H1 (cell line): ENCODE measurements at regions of chr15 and their contacts with region 1.

Region 1: DNA sequence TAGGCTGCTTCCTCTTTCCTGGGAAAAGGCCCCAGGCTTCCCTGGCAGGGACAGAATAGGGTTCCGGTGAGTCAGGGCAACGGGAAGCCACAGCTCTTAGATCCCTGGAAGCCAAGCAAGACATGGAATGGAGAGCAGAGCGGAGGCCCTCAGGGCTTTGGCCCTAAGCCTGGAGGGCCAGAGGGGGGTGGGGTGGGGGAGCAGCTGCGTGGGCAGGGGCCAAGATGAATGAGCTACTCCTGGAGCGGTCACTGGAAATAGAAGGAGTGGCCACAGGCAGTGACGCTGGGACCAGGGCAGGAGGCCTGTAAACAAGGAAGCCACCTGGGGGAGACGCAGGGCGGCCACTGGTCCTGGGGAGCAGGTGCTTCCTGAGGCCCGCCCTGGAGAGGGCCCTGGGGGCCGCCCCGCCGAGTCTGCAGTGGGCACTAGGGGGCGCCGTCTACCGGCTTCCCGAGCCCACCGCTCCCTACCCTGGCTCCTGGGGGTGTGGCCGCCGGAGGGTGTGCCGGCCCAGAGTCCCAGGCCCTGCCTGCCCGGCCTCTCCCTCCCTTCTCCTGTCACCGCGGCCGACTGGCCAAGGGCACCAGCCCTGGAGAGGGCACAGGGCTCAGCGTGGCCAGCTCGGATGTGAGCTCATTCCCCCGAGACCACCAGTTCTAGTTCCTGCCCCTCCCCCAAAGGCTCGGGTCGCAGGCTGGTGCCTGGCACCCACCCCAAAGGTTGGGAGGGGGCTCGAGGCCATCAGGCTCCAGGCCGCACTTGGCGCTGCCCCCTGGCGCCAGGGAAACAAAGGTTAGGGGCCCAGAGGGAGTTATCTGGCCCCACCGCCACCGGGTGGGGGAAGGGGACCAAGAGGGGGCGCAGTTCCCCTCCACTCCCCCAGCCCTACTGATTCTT is 12.1 kb downstream of the VPS18 start:
- DNase-seq: peak; percentile 65 to 98
- H3K4me3 ChIP-seq: peak overlapping the region; percentile 18 to 62 (median 36); a peak in 7 of 8 replicates
- H3K27ac ChIP-seq: no peak overlapping the region
- H3K4me1 ChIP-seq: peaks cover 0 to 13% (median 10%) of the 10 kb centered on the region in 4 experiments; a peak in 6 of 7 replicates
- H3K27me3 ChIP-seq: no peaks in the 10 kb centered on the region; a peak in 1 of 7 replicates
- CTCF ChIP-seq: peak in 2 of 3 experiments; percentile 80 to 97; a peak in 3 of 4 replicates
- EP300 ChIP-seq: no peak
- POLR2A ChIP-seq: no peak; a peak in 1 of 3 replicates
- RAD21 ChIP-seq: peak; percentile 80 to 87

Region 2: GRCh38 chr15:40812728-40813425 is 93.5 kb before region 1 on chr15:
- CTCF ChIA-PET with region 1: no interaction called
- POLR2A ChIA-PET with region 1: no interaction called
- DNase-seq: no peak
- H3K4me3 ChIP-seq: no peak overlapping the region
- H3K27ac ChIP-seq: no peak overlapping the region
- H3K4me1 ChIP-seq: peaks cover 0 to 5% (median 3%) of the 10 kb centered on the region in 4 experiments; a peak in 5 of 7 replicates
- H3K27me3 ChIP-seq: no peaks in the 10 kb centered on the region
- CTCF ChIP-seq: no peak
- EP300 ChIP-seq: no peak
- POLR2A ChIP-seq: no peak
- RAD21 ChIP-seq: no peak

Region 3: GRCh38 chr15:40823572-40824343 is 82.6 kb before region 1 on chr15:
- CTCF ChIA-PET with region 1: no interaction called
- POLR2A ChIA-PET with region 1: no interaction called
- DNase-seq: no peak
- H3K4me3 ChIP-seq: no peak overlapping the region
- H3K27ac ChIP-seq: no peak overlapping the region
- H3K4me1 ChIP-seq: no peaks in the 10 kb centered on the region
- H3K27me3 ChIP-seq: no peaks in the 10 kb centered on the region
- CTCF ChIP-seq: no peak
- EP300 ChIP-seq: no peak
- POLR2A ChIP-seq: no peak
- RAD21 ChIP-seq: no peak

Region 4: GRCh38 chr15:40893733-40894688 is 12.3 kb before region 1 on chr15 and contains the start of gene VPS18:
- CTCF ChIA-PET with region 1: interaction called, 66 read pairs
- POLR2A ChIA-PET with region 1: interaction called, 18 read pairs
- DNase-seq: peak; percentile 95 to 100
- H3K4me3 ChIP-seq: peak within 1 kb of the TSS; percentile 60 to 93 (median 88)
- H3K27ac ChIP-seq: peak within 1 kb of the TSS; percentile 68
- H3K4me1 ChIP-seq: peaks cover 3 to 14% (median 7%) of the 10 kb centered on the region in 4 experiments; a peak in 6 of 7 replicates
- H3K27me3 ChIP-seq: peaks cover 0 to 8% (median 2%) of the 10 kb centered on the region in 4 experiments; a peak in 3 of 7 replicates
- CTCF ChIP-seq: peak; percentile 85 to 91 (median 89)
- EP300 ChIP-seq: no peak
- POLR2A ChIP-seq: peak in 1 of 2 experiments; percentile 35; a peak in 2 of 3 replicates
- RAD21 ChIP-seq: peak; percentile 87 to 88
- total RNA-seq, gene VPS18: 31.9 and 32.7 TPM in 2 replicates

Region 5: GRCh38 chr15:40952901-40953712 is 46.8 kb after region 1 on chr15 and contains the start of gene CHAC1:
- CTCF ChIA-PET with region 1: interaction called, 48 read pairs
- POLR2A ChIA-PET with region 1: interaction called, 209 read pairs
- DNase-seq: peak; percentile 96 to 97
- H3K4me3 ChIP-seq: peak within 1 kb of the TSS; percentile 74 to 92 (median 82)
- H3K27ac ChIP-seq: peak within 1 kb of the TSS; percentile 97
- H3K4me1 ChIP-seq: peaks cover 2 to 20% (median 12%) of the 10 kb centered on the region in 4 experiments
- H3K27me3 ChIP-seq: no peaks in the 10 kb centered on the region
- CTCF ChIP-seq: peak in 1 of 3 experiments; percentile 0; a peak in 1 of 4 replicates
- EP300 ChIP-seq: peak in 1 of 2 experiments; percentile 50; a peak in 1 of 3 replicates
- POLR2A ChIP-seq: peak; percentile 76 to 85
- RAD21 ChIP-seq: peak in 1 of 2 experiments; percentile 10; a peak in 1 of 4 replicates
- total RNA-seq, gene CHAC1: 28.7 and 34.3 TPM in 2 replicates

Region 6: GRCh38 chr15:40974879-40975278 is 68.5 kb after region 1 on chr15:
- CTCF ChIA-PET with region 1: interaction called, 33 read pairs
- POLR2A ChIA-PET with region 1: interaction called, 3 read pairs
- DNase-seq: no peak
- H3K4me3 ChIP-seq: no peak overlapping the region
- H3K27ac ChIP-seq: no peak overlapping the region
- H3K4me1 ChIP-seq: peaks cover 0 to 2% (median 0%) of the 10 kb centered on the region in 4 experiments; a peak in 1 of 7 replicates
- H3K27me3 ChIP-seq: no peaks in the 10 kb centered on the region
- CTCF ChIP-seq: no peak
- EP300 ChIP-seq: no peak
- POLR2A ChIP-seq: no peak
- RAD21 ChIP-seq: no peak; a peak in 1 of 4 replicates

Region 7: DNA sequence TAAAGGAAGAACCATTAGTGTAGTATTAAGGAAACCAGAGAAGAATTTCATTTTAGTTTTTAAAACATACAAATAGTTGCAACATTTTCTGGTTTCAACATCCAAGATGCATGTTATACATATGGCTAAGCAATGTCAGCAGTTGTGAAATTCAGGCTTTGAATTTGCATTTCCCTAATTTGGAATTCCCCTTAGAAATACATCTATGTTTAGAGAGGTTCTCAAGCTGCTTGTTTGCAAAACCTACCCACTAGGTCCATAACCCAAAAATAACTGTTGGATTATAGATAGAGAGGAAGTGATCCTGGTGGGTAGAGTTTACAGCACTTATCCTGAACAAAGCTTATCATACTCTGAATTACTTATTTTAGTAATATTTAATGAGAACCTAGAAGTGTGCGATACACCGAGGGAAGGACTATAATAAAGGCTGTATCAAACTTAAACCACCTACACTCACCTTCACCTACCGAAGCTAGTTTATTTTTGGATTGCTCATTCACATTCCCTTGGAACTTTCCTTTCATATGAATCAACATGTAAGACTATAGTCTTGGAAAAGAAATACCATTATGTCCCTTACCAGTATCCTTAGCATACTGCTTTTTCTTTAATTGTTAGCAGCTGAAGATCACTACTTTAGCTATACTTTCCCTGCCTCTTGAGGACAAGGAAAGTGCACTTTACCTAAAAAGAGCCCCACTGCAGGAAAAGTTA is 107.5 kb after region 1 on chr15:
- CTCF ChIA-PET with region 1: interaction called, 257 read pairs
- POLR2A ChIA-PET with region 1: no interaction called
- DNase-seq: no peak
- H3K4me3 ChIP-seq: no peak overlapping the region
- H3K27ac ChIP-seq: no peak overlapping the region
- H3K4me1 ChIP-seq: no peaks in the 10 kb centered on the region
- H3K27me3 ChIP-seq: no peaks in the 10 kb centered on the region
- CTCF ChIP-seq: no peak
- EP300 ChIP-seq: no peak
- POLR2A ChIP-seq: no peak
- RAD21 ChIP-seq: no peak

Region 8: DNA sequence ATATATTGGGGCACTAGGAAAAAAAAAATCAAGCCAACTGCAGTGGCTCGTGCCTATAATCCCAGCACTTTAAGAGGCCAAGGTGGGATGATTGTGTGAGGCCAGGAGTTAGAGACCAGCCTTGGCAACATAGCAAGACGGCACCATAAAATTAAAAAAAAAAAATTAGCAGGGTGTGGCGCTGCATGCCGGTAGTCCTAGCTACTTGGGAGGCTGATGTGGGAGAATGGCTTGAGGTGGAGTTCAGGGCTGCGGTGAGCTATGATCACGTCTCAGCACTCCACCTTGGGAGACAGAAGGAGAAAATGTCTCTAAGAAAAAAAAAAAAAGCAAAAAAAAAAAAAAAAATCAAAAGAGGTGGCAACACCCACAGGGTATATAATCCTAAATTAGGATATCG is 160.2 kb after region 1 on chr15:
- CTCF ChIA-PET with region 1: interaction called, 11 read pairs
- POLR2A ChIA-PET with region 1: no interaction called
- DNase-seq: no peak
- H3K4me3 ChIP-seq: no peak overlapping the region
- H3K27ac ChIP-seq: no peak overlapping the region
- H3K4me1 ChIP-seq: no peaks in the 10 kb centered on the region
- H3K27me3 ChIP-seq: no peaks in the 10 kb centered on the region
- CTCF ChIP-seq: no peak
- EP300 ChIP-seq: no peak
- POLR2A ChIP-seq: no peak
- RAD21 ChIP-seq: no peak